ENCODE measurements at regions of chr10 and their contacts with region 1.

Region 1: DNA sequence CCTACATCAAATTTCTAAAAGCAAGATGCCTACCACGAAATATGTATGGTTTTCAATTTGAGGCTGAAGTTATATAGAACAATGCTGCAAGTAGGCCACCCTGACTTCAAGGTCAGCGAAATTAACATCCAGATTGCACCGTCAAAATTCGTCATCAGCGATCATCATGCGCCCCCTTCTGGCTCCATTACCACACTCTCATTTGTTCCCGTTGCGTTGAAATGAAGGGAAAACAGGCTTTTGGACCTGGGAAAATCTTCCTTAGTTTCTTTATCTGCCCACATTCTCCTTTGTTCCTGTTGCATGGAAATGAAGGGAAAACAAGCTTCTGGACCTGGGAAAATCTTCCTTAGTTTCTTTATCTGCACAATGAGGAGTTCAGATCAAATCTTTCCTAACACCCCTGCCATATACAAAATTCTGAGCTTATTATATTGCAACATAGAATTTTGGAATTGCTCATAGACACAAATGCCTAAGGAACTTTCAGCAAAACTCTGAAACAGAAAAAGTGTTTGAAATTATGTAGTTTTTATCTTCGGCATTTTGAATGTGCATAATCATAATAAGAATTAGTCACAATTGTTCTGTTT is 98.2 kb upstream of the PRKCQ start:
- DNase-seq: peak; percentile 32 to 53 (median 45)
- H3K4me3 ChIP-seq: no peak overlapping the region
- H3K4me3 Mint-ChIP-seq: peak overlapping the region in 1 of 2 donors; percentile 51
- H3K27ac ChIP-seq: no peak overlapping the region
- H3K27ac Mint-ChIP-seq: no peak overlapping the region
- H3K4me1 ChIP-seq: no peaks in the 10 kb centered on the region
- H3K4me1 Mint-ChIP-seq: peaks cover 6% of the 10 kb centered on the region
- H3K27me3 ChIP-seq: peaks cover 10 to 11% of the 10 kb centered on the region in 2 donors
- H3K27me3 Mint-ChIP-seq: peaks cover 3 to 16% (median 8%) of the 10 kb centered on the region in 3 donors
- CTCF ChIP-seq: peak; percentile 84

Region 2: DNA sequence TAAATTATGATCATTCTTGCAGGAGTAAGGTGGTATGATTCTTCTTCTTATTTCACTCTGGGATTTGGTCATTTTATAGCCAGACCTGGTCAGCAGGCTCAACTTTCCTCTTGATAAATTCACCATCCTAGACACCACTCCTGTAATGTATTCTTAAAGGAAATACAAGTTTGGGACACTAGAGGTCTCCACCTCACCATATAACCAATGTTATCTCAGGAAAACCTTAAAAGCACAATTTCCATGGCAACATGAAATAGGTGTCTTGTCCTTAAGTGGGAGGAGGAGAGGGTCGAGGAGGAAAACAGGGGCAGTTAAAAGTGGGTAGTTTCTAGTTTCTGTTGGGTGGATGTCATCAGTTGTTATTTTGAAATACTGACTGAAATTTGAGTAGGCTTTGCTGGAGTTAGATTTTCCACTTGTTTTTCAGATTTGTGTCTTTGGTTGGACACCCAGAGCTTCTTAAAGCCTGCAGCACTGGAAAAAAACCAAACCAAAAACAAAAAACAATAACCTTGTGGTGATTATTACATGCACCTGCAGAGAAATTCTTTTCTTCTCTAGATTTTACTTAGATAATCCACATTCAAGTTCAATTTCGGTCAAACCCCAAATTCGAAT is 261.3 kb before region 1 on chr10:
- intact Hi-C with region 1: loop called (anchors 2 to 5 kb)
- DNase-seq: peak in 2 of 3 donors; percentile 53 to 65
- H3K4me3 ChIP-seq: no peak overlapping the region
- H3K4me3 Mint-ChIP-seq: no peak overlapping the region
- H3K27ac ChIP-seq: no peak overlapping the region
- H3K27ac Mint-ChIP-seq: no peak overlapping the region
- H3K4me1 ChIP-seq: no peaks in the 10 kb centered on the region
- H3K4me1 Mint-ChIP-seq: peaks cover under 1% of the 10 kb centered on the region
- H3K27me3 ChIP-seq: no peaks in the 10 kb centered on the region
- H3K27me3 Mint-ChIP-seq: peaks cover 0 to 3% (median 2%) of the 10 kb centered on the region in 3 donors
- CTCF ChIP-seq: peak; percentile 76